ENCODE measurements at regions of chr10 and their contacts with region 1.

Region 1: DNA sequence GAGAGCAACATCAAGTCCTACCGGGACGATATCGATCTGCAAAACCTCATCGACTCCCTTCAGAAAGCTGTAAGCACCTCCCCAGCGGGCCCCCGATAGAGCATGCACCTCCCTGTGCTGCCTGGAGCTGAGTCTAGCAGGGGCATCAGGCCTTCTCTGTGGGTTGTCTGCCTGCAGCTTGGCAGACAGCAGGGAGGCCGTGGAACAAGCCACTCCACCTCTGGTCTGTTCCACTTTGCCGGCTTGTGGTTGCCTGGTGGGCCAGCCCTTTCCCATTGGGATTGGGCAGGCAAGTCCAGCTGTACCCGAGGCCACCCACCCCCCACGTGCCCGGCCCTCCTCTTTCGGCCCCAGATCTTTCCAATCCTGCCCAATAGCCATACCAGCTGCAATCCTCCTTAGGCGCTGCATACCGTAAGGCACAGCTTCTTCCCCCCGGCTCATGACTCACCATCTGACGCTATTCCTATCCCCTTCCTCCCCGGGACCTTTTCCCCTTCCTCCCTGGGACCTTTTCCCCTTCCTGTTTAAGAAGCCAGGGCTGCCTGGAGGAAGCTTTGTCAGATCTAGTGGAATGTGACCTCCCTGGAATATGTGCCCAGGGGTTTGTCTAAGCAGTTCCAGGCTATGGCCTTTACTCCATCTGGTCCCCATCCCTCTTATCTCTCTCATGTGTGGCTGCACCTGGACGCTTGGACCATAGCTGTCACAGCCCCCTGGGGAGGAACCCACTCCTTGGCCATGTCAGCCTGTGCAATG is 28.1 kb upstream of the SH2D4B start:
- DNase-seq: no peak
- H3K4me3 Mint-ChIP-seq: no peak overlapping the region
- H3K27ac Mint-ChIP-seq: peak overlapping the region; percentile 28
- H3K4me1 Mint-ChIP-seq: peaks cover 35% of the 10 kb centered on the region
- H3K27me3 Mint-ChIP-seq: no peaks in the 10 kb centered on the region

Region 2: GRCh38 chr10:80530251-80530650 is 20.7 kb after region 1 on chr10:
- CTCF ChIA-PET with region 1: interaction called, 11 read pairs
- POLR2A ChIA-PET with region 1: interaction called, 4 read pairs
- DNase-seq: peak; percentile 56
- H3K4me3 Mint-ChIP-seq: peak overlapping the region; percentile 43
- H3K27ac Mint-ChIP-seq: peak overlapping the region; percentile 92
- H3K4me1 Mint-ChIP-seq: peaks cover 70% of the 10 kb centered on the region
- H3K27me3 Mint-ChIP-seq: no peaks in the 10 kb centered on the region